RWPE1 (cell line): ENCODE measurements at regions of chr7 and their contacts with region 1.

Region 1: DNA sequence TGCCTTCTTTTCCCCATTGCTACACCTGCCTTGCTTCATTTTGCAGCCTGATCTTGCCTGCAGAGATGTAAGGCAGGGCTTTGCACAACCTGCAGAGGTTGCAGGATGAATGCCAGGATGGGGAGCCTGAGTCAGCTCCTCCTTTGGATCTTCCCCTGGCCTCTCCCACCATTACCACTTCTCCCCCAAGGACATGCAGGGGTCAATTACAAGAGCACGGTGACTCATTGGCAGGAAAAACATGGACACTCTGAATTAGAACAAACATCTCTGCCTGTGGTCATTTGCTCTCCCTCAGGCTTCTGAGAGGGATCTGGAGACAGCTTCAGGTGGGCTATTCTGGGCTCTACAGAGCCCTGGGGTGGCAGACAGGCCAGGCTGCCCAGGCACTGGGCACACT is 89.2 kb downstream of the HERPUD2 start:
- DNase-seq: peak; percentile 26
- H3K27ac ChIP-seq: no peak overlapping the region
- CTCF ChIP-seq: no peak

Region 2: DNA sequence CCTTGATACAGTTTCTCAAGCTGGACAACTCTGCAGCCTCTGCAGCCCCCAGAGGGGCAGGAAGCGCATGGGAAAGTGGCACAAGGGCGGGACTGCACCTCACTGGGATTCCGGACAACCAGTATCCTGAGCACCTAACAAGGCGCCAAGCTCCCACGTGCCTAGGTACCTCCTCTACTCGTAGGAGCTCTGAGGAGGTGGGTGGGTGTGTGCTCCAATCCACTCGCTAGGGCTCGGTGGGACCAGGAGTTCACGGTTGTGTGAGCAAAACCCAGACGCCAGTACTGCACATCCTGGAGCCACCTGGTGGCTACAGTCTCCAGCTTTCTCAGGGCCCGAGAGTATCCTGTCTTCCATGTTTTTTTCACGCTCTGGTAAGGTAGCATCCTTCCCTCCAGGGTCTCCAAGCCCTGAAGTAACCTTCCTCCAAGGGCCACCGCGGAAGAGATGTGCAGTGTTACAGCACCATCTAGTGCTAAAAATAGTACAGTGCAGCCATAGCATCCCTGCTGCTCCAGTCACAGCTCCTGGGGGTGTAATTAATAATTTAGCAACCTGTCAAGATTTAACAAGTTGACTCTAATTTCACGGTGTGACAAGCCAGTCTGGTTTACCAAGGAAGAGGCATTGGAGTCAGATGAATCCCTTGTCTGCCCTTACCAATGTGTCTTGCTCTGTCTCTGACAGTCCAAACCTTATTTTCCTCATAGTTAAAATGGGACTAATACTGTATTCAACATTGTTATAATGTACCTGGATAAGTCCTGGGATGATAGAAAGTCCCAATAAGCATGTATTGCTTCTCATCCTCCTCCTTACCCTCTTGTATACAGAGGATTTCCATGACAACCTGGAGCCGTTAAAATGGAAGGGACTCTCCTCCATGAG is 18.8 kb after region 1 on chr7:
- CTCF ChIA-PET with region 1: interaction called, 10 read pairs
- POLR2A ChIA-PET with region 1: no interaction called
- DNase-seq: peak; percentile 72
- H3K27ac ChIP-seq: no peak overlapping the region
- CTCF ChIP-seq: peak; percentile 92